Breast epithelium (tissue), 4 donors: ENCODE measurements at regions of chr14 and their contacts with region 1.

Region 1: GRCh38 chr14:65720171-65720570 is 307.6 kb downstream of the FUT8 start:
- DNase-seq: no peak
- H3K4me3 ChIP-seq: no peak overlapping the region
- H3K27ac ChIP-seq: no peak overlapping the region
- H3K4me1 ChIP-seq: no peaks in the 10 kb centered on the region
- H3K27me3 ChIP-seq: no peaks in the 10 kb centered on the region
- CTCF ChIP-seq: no peak
- POLR2A ChIP-seq: no peak

Region 2: GRCh38 chr14:65703996-65704395 is 16.2 kb before region 1 on chr14:
- intact Hi-C with region 1: loop called (anchors 1 kb)
- DNase-seq: no peak
- H3K4me3 ChIP-seq: no peak overlapping the region
- H3K27ac ChIP-seq: no peak overlapping the region
- H3K4me1 ChIP-seq: no peaks in the 10 kb centered on the region
- H3K27me3 ChIP-seq: no peaks in the 10 kb centered on the region
- CTCF ChIP-seq: no peak
- POLR2A ChIP-seq: no peak